Panc1 (cell line): ENCODE measurements at regions of chr17 and their contacts with region 1.

Region 1: GRCh38 chr17:8785547-8786413 is 13.4 kb downstream of the MFSD6L start:
- DNase-seq: peak; percentile 56
- ATAC-seq: peak; percentile 94
- H3K4me3 ChIP-seq: no peak overlapping the region
- H3K27ac ChIP-seq: no peak overlapping the region
- H3K4me1 ChIP-seq: no peaks in the 10 kb centered on the region
- H3K27me3 ChIP-seq: 0 out of 2 replicates have a peak, but pooled peaks cover 2% of the 10 kb centered on the region
- CTCF ChIP-seq: peak; percentile 85

Region 2: DNA sequence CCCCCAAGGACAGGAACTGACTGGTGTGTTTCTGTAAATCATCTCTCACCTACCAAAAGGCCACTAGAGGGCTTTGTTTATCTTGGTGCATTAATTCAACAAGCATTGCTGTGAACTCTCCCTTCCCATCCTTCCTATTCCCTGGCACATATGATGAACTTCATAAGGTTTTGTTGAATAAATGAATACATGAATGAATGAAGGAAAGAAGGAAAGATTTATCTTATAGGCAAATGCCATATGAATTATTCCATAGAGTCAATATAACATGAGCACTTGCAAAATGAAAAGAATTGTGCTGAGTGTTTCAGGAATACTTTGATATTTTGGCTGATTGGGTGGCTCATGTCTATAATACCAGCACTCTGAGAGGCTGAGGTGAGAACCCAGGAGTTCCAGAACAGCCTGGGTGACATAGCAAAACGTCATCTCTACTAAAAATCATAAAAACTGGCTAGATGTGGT is 31.8 kb before region 1 on chr17:
- CTCF ChIA-PET with region 1: no interaction called
- POLR2A ChIA-PET with region 1: no interaction called
- in situ Hi-C with region 1: no loop called
- intact Hi-C with region 1: loop called (anchors 5 kb)
- DNase-seq: peak; percentile 25
- ATAC-seq: peak; percentile 80; the same call in 1 of the 2 replicates
- H3K4me3 ChIP-seq: no peak overlapping the region
- H3K27ac ChIP-seq: no peak overlapping the region
- H3K4me1 ChIP-seq: no peaks in the 10 kb centered on the region
- H3K27me3 ChIP-seq: peaks cover 11% of the 10 kb centered on the region; the same call in 1 of the 2 replicates
- CTCF ChIP-seq: peak; percentile 76

Region 3: GRCh38 chr17:9072696-9073339 is 287.0 kb after region 1 on chr17:
- CTCF ChIA-PET with region 1: no interaction called
- POLR2A ChIA-PET with region 1: no interaction called
- in situ Hi-C with region 1: no loop called
- intact Hi-C with region 1: no loop called
- DNase-seq: no peak
- ATAC-seq: no peak
- H3K4me3 ChIP-seq: no peak overlapping the region
- H3K27ac ChIP-seq: no peak overlapping the region
- H3K4me1 ChIP-seq: no peaks in the 10 kb centered on the region
- H3K27me3 ChIP-seq: no peaks in the 10 kb centered on the region
- CTCF ChIP-seq: no peak